Heart right ventricle (tissue), 16 donors: ENCODE measurements at regions of chr11 and their contacts with region 1.

Region 1: DNA sequence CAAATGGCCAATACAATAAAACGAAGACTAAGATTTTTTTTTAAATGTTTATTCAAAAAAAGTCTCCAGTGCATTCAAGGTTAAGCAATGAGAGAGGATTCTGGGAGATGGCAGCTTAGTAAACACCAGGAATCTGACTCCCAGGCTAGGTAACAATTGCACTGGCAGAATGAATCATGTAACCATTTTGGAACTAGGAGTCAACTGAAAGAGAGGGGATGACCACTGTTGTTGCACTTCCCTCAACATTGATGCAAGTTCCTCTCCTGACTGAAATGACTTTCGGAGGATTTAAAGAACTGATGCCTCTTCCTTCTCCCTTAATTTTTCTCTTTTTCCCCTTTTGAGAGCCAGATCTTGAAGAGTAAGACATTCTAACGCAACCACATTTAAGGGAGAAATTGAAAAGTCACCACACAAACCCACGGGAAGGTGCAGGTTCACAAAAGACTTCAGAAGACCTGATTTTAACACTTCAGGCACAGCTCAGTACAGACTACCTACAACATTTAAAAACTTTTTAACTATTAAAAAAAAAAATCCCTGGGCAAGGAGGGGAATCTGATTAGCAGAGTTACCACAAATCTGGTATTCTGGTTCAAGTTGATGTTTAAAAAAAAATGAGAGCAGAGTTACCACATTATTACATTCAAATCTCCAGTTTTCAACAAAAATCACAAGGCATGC is 56.8 kb downstream of the FCHSD2 start:
- DNase-seq: peak in 1 of 2 donors; percentile 17
- ATAC-seq: peak in 5 of 8 donors; percentile 50 to 88 (median 69)
- H3K4me3 ChIP-seq: no peak overlapping the region
- H3K27ac ChIP-seq: peak overlapping the region in 5 of 10 donors; percentile 12 to 76 (median 46)
- H3K4me1 ChIP-seq: peaks cover 0 to 38% (median 11%) of the 10 kb centered on the region in 9 donors
- H3K27me3 ChIP-seq: no peaks in the 10 kb centered on the region
- CTCF ChIP-seq: no peak

Region 2: DNA sequence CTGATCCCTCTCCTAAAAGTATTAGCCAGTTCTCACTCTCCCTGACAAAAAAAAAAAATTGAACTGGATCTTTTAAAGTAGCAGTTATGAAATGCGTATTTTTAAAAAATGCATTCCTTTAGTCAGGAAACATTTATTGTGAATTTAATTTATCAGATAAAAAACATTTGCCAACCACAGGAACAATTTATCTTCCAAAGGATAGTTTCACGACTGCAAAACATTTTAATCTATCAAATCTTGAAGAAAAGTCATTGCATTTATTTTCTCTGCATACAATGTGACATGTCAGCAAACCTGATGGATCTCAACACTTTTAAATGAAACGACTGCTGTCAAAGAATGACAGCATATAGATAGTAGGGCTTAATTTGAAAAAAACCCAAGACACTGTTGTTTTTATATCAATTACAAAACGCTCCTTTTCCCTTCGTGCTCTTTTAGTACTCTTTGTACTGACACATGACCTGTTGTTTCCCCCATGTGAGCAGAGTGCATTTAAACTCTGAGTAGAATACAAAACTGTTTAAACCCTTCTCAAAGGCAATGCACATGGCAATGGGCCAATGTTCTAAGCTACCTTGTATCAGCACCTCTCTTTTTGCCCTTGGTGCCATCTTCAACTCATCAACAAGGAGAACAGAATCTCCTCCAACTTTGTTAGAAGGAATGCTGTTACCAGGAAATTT is 164.2 kb before region 1 on chr11:
- intact Hi-C with region 1: no loop called
- DNase-seq: no peak
- ATAC-seq: peak in 2 of 8 donors; percentile 10 to 60
- H3K4me3 ChIP-seq: no peak overlapping the region
- H3K27ac ChIP-seq: peak overlapping the region in 2 of 10 donors; percentile 27 to 30
- H3K4me1 ChIP-seq: peaks cover 0 to 40% (median 23%) of the 10 kb centered on the region in 9 donors
- H3K27me3 ChIP-seq: no peaks in the 10 kb centered on the region
- CTCF ChIP-seq: no peak

Region 3: GRCh38 chr11:73040046-73040445 is 45.3 kb before region 1 on chr11:
- intact Hi-C with region 1: no loop called
- DNase-seq: no peak
- ATAC-seq: no peak
- H3K4me3 ChIP-seq: no peak overlapping the region
- H3K27ac ChIP-seq: no peak overlapping the region
- H3K4me1 ChIP-seq: peaks cover 0 to 9% (median 0%) of the 10 kb centered on the region in 9 donors
- H3K27me3 ChIP-seq: no peaks in the 10 kb centered on the region
- CTCF ChIP-seq: no peak

Region 4: GRCh38 chr11:73126804-73127480 is 41.6 kb after region 1 on chr11:
- intact Hi-C with region 1: loop called in 1 of 10 experiments (anchors 5 kb)
- DNase-seq: no peak
- ATAC-seq: peak in 1 of 8 donors; percentile 27
- H3K4me3 ChIP-seq: no peak overlapping the region
- H3K27ac ChIP-seq: peak overlapping the region in 2 of 10 donors; percentile 46 to 55
- H3K4me1 ChIP-seq: peaks cover 0 to 31% (median 19%) of the 10 kb centered on the region in 9 donors
- H3K27me3 ChIP-seq: no peaks in the 10 kb centered on the region
- CTCF ChIP-seq: no peak